Common myeloid progenitor, CD34-positive (primary cell): ENCODE measurements at regions of chr19 and their contacts with region 1.

Region 1: DNA sequence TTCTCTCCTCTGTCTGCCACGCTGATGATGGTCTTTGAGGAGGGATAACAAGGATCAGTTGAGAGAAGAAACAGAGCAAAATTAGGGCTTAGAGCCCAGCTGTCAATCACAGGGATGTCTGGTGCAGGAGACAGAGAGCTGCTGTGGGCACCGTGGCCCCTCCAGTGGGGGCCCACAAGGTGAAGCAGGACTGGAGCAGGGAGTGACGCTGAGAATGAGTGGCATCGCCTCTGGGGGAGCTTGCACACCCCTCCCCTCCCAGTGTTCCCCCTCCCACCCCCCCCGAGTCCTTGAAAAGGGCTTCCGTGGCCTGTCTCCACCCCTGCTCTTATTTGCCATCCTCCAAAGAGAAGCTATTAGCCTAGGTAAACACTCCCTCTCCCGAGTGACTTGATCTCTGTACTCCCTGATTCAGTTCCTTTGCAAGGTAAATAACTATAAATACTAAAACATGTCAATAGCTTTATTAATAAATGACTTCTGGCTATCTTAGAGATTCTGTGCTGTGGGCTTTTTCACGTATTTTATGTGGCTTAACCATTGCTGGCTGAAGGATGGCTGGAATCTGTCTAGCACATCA is 440.0 kb downstream of the ZNF536 start:
- DNase-seq: no peak
- H3K4me3 ChIP-seq: no peak overlapping the region
- H3K27ac ChIP-seq: no peak overlapping the region
- H3K4me1 ChIP-seq: no peaks in the 10 kb centered on the region
- H3K27me3 ChIP-seq: no peaks in the 10 kb centered on the region

Region 2: GRCh38 chr19:30799865-30800755 is 12.1 kb before region 1 on chr19:
- CTCF ChIA-PET with region 1: interaction called, 10 read pairs
- POLR2A ChIA-PET with region 1: no interaction called
- DNase-seq: peak; percentile 10 to 37 (median 28)
- H3K4me3 ChIP-seq: no peak overlapping the region
- H3K27ac ChIP-seq: no peak overlapping the region
- H3K4me1 ChIP-seq: peaks cover 0 to 14% (median 5%) of the 10 kb centered on the region in 4 experiments
- H3K27me3 ChIP-seq: peaks cover 0 to 12% (median 7%) of the 10 kb centered on the region in 5 experiments

Region 3: DNA sequence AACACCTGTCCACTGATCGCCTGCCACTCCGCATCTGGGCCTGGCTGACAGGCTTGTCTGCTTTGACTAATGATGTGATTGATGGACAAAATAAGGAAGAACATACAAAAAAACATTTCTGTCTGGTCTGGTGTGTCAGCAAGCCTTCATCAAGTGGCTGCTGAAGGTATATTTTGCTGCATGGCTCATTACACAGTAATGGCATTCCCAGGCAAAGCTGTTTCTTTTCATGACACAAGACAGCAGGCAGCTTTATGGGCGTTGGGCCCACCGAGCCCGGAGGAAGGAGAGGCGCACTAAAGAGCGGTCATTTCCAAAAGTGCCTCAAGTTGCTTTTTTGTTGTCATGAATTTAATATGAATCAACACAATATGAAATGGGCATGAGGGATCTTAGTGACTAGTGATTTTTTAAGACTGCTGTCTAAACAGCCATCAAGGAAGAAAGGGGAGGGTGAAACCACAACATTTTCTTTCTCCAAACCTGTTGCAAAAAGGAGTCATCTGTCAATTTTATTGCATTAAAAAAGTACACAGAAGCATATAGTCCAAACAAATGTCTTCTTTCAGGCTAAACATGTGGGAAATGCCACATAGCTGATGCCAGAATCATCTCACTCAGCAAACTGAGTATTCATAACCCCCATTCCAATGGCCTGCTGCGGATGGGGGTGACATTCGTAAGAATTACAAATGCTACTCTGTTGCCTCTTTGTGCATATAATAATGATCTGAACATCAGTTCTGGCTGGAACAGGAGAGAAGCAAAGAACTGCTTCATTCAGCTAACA is 36.6 kb after region 1 on chr19:
- CTCF ChIA-PET with region 1: no interaction called
- POLR2A ChIA-PET with region 1: no interaction called
- DNase-seq: no peak
- H3K4me3 ChIP-seq: no peak overlapping the region
- H3K27ac ChIP-seq: no peak overlapping the region
- H3K4me1 ChIP-seq: peaks cover 0 to 6% (median 0%) of the 10 kb centered on the region in 4 experiments
- H3K27me3 ChIP-seq: no peaks in the 10 kb centered on the region